ENCODE measurements at regions of chr14 and their contacts with region 1.

Region 1: DNA sequence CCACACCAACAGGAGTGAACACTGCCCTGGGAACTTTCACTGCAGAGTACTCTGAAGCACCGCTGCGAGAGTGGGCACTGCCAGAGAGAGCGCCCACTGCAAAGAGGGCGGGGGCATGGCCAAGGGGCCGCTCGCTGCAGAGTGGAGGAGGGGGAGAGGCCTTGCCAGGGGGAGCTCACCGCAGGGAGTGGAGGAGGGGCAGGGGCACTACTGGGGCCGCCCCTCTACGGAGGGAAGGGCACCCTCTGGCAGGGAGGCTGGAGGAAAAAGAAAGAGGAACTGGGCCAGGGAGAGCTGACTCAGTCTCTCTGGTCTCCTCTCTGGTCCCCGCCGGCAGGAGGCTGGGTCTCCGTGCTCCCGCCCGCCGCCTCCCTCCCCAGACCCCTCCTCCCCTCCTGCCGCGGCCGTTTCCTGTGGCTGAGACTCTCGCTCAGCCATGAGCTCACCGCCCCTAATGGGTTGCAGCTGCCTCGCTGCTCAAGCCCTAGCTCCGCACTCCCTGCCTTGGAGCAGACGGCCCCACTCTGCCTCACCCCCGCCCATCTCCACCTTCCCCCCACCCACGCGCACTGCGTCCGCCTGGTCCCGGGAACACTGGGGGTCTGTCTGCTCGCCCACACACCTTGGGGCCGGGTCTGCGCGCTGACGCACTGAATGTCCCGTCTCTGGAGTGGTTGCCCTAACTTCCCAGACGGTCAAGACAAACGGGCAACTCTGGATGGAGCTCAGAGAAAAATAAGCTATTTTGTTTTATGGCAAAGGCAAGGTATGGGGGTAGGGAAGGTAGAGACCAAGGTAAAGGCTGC is 1.3 kb downstream of the ARHGEF40 start:
- DNase-seq: peak in 1 of 2 experiments; percentile 36
- H3K4me3 ChIP-seq: peak overlapping the region; percentile 76
- H3K4me3 Mint-ChIP-seq: peak overlapping the region; percentile 84
- H3K27ac Mint-ChIP-seq: peak overlapping the region; percentile 22
- H3K4me1 ChIP-seq: peaks cover 6% of the 10 kb centered on the region
- H3K4me1 Mint-ChIP-seq: no peaks in the 10 kb centered on the region
- H3K27me3 ChIP-seq: no peaks in the 10 kb centered on the region
- H3K27me3 Mint-ChIP-seq: peaks cover 3% of the 10 kb centered on the region
- CTCF ChIP-seq: no peak

Region 2: DNA sequence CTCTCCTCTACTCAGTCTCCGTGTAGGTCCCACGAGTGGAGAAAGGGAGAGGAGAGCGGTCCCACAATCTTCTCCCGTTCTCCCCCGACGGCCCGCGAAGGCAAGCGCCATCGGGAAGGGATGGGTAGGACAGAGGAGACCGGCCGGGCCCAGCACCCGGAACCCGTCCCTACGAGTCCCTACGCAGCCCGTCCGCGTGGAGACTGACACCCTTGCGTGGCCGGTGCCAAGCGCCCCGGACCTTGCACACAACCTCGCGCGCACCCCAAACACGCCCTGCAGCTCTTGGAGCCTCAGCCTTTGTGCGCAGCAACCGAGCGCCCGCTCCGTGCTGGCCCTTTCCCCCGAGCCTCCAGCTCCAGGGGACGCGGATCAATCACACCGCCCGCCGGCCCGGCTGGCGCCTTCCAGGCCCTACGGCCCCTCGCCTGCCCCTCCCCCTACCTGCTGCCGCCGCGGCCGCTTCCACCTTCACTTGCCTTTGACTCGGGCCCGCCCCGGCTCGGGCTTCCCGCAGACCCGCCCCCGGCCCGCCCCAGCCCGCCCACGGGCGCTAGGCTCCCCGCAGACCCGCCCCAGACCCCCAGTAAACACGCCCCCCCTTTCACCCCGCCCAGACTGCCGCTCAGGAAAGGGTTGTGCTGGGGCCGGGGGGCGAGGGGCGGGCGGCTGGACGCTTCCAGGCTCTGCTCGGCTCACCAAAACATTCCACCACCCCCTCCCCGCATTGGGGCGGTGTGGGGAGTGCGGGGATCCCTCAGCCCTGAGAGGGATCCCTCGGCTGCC is 46.6 kb before region 1 on chr14 and contains the start of gene NDRG2:
- CTCF ChIA-PET with region 1: no interaction called
- POLR2A ChIA-PET with region 1: no interaction called
- intact Hi-C with region 1: no loop called
- DNase-seq: peak; percentile 84 to 86
- H3K4me3 ChIP-seq: peak within 1 kb of the TSS; percentile 73
- H3K4me3 Mint-ChIP-seq: peak within 1 kb of the TSS; percentile 72
- H3K27ac Mint-ChIP-seq: peak within 1 kb of the TSS; percentile 73
- H3K4me1 ChIP-seq: peaks cover 15% of the 10 kb centered on the region
- H3K4me1 Mint-ChIP-seq: peaks cover 18% of the 10 kb centered on the region
- H3K27me3 ChIP-seq: no peaks in the 10 kb centered on the region
- H3K27me3 Mint-ChIP-seq: no peaks in the 10 kb centered on the region
- CTCF ChIP-seq: no peak
- total RNA-seq, gene NDRG2: 16.4 and 17.7 TPM in 2 replicates

Region 3: GRCh38 chr14:21092273-21093011 is 21.0 kb after region 1 on chr14:
- CTCF ChIA-PET with region 1: interaction called, 23 read pairs
- POLR2A ChIA-PET with region 1: no interaction called
- intact Hi-C with region 1: loop called (anchors 1 kb)
- DNase-seq: peak in 1 of 2 experiments; percentile 86
- H3K4me3 ChIP-seq: no peak overlapping the region
- H3K4me3 Mint-ChIP-seq: no peak overlapping the region
- H3K27ac Mint-ChIP-seq: no peak overlapping the region
- H3K4me1 ChIP-seq: no peaks in the 10 kb centered on the region; the same call in 1 of the 2 replicates
- H3K4me1 Mint-ChIP-seq: peaks cover 15% of the 10 kb centered on the region
- H3K27me3 ChIP-seq: no peaks in the 10 kb centered on the region
- H3K27me3 Mint-ChIP-seq: no peaks in the 10 kb centered on the region
- CTCF ChIP-seq: peak; percentile 99

Region 4: GRCh38 chr14:21098076-21098891 is 26.9 kb after region 1 on chr14 and contains the start of gene ZNF219:
- CTCF ChIA-PET with region 1: interaction called, 127 read pairs
- POLR2A ChIA-PET with region 1: interaction called, 6 read pairs
- intact Hi-C with region 1: no loop called
- DNase-seq: peak; percentile 70 to 81
- H3K4me3 ChIP-seq: peak within 1 kb of the TSS; percentile 60
- H3K4me3 Mint-ChIP-seq: peak within 1 kb of the TSS; percentile 81
- H3K27ac Mint-ChIP-seq: peak within 1 kb of the TSS; percentile 38
- H3K4me1 ChIP-seq: peaks cover 29% of the 10 kb centered on the region
- H3K4me1 Mint-ChIP-seq: peaks cover 45% of the 10 kb centered on the region
- H3K27me3 ChIP-seq: no peaks in the 10 kb centered on the region
- H3K27me3 Mint-ChIP-seq: no peaks in the 10 kb centered on the region
- CTCF ChIP-seq: no peak
- total RNA-seq, gene ZNF219: 34.1 and 35.2 TPM in 2 replicates

Region 5: GRCh38 chr14:21103710-21104447 is 32.5 kb after region 1 on chr14:
- CTCF ChIA-PET with region 1: interaction called, 127 read pairs
- POLR2A ChIA-PET with region 1: interaction called, 7 read pairs
- intact Hi-C with region 1: loop called (anchors 1 kb)
- DNase-seq: peak; percentile 95 to 97
- H3K4me3 ChIP-seq: peak overlapping the region; percentile 72
- H3K4me3 Mint-ChIP-seq: peak overlapping the region; percentile 87
- H3K27ac Mint-ChIP-seq: peak overlapping the region; percentile 85
- H3K4me1 ChIP-seq: peaks cover 46% of the 10 kb centered on the region
- H3K4me1 Mint-ChIP-seq: peaks cover 39% of the 10 kb centered on the region
- H3K27me3 ChIP-seq: no peaks in the 10 kb centered on the region
- H3K27me3 Mint-ChIP-seq: no peaks in the 10 kb centered on the region
- CTCF ChIP-seq: peak; percentile 59 to 85

Region 6: DNA sequence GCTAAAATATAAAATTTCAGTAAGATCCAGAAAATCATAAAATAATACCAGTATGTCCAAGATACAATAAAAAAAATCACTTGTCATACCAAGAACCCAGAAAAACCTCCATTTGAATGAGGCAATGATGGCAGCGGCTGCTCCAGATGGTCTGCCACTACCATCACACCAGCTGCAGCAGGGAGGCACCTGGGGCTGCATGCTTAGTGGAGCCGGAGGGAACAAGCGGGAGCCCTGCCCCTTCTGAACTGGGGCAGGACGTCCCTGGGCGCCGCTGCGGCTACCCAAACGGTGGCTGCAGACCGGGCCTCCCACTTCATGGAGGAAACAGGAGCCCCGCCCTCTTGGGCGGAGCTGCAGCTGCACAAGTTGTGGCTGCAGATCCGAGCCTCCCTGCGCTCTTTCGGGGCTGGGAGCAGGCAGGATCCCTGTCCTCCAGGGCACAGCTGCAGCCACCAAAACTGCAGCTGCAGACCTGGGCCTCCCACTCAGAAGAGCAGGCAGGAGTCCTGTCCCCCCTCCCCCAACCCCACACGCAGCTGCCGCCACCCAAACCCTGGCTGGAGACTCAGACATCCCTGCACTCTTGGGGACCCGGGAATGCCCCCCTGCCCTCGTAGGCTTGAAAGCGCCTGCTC is 120.5 kb after region 1 on chr14:
- CTCF ChIA-PET with region 1: interaction called, 3 read pairs
- POLR2A ChIA-PET with region 1: no interaction called
- intact Hi-C with region 1: loop called (anchors 5 kb)
- DNase-seq: peak; percentile 57
- H3K4me3 ChIP-seq: 0 out of 2 replicates have a peak overlapping the region, but pooled peaks have one; percentile 5
- H3K4me3 Mint-ChIP-seq: no peak overlapping the region
- H3K27ac Mint-ChIP-seq: no peak overlapping the region
- H3K4me1 ChIP-seq: no peaks in the 10 kb centered on the region
- H3K4me1 Mint-ChIP-seq: no peaks in the 10 kb centered on the region
- H3K27me3 ChIP-seq: no peaks in the 10 kb centered on the region
- H3K27me3 Mint-ChIP-seq: no peaks in the 10 kb centered on the region
- CTCF ChIP-seq: no peak